Activated naive CD4-positive, alpha-beta T cell treated with anti-CD3 and anti-CD28 coated beads for 36 hours (primary cell): ENCODE measurements at regions of chr14 and their contacts with region 1.

Region 1: GRCh38 chr14:95527387-95528002 is 7.4 kb upstream of the GLRX5 start:
- DNase-seq: peak; percentile 81
- H3K4me3 Mint-ChIP-seq: peak overlapping the region; percentile 16
- H3K27ac Mint-ChIP-seq: peak overlapping the region; percentile 79
- H3K4me1 Mint-ChIP-seq: peaks cover 79% of the 10 kb centered on the region
- H3K27me3 Mint-ChIP-seq: no peaks in the 10 kb centered on the region

Region 2: DNA sequence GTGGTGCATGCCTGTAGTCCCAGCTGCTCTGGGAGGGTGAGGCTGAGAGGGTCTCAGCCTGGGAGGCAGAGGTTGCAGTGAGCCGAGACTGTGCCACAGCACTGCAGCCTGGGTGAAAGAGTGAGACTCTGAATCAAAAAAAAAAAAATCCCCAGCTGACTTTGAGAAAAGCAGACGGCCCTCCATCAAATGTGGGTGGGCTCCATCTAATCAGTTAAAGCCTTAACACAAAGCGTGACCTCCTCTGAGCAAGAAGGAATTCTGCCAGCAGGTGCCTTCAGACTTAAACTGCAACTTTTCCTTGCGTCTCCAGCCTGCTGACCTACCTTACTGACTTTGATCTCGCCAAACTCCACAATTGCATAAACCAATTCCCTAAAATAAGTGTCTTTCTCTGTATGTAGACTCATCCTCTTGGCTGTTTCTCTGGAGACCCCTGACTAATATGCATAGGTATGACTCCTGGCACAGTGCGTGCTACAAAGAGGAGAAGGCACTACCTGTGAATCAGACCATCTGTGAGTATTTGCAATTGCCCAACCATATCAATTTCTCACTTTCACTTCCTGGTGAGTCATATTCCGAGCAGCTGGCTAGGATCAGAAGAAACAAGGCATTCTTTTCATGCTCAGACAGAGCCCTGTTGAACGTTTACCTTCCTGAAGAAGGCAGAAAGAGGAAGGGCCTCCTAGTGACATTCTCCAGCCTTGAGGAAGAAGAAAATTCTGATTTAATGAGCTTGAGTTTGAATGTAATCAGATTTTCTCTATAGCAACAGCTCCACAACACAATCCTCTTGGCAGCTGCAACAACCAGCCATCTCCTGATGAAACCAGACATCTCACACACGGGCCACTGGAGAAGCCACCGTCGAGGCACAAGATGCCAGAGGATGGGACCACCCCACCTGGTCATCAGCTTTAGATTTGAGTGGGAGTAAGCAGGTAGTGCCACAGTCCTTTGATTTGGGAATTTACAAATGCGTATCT is 262.1 kb before region 1 on chr14:
- CTCF ChIA-PET with region 1: interaction called, 4 read pairs
- intact Hi-C with region 1: loop called (anchors 1 kb)
- DNase-seq: peak; percentile 79
- H3K4me3 Mint-ChIP-seq: no peak overlapping the region
- H3K27ac Mint-ChIP-seq: peak overlapping the region; percentile 56
- H3K4me1 Mint-ChIP-seq: peaks cover 36% of the 10 kb centered on the region
- H3K27me3 Mint-ChIP-seq: no peaks in the 10 kb centered on the region

Region 3: GRCh38 chr14:95442633-95443021 is 84.9 kb before region 1 on chr14:
- CTCF ChIA-PET with region 1: interaction called, 184 read pairs
- intact Hi-C with region 1: loop called (anchors 1 kb)
- DNase-seq: peak; percentile 88
- H3K4me3 Mint-ChIP-seq: no peak overlapping the region
- H3K27ac Mint-ChIP-seq: peak overlapping the region; percentile 20
- H3K4me1 Mint-ChIP-seq: peaks cover 7% of the 10 kb centered on the region
- H3K27me3 Mint-ChIP-seq: no peaks in the 10 kb centered on the region

Region 4: DNA sequence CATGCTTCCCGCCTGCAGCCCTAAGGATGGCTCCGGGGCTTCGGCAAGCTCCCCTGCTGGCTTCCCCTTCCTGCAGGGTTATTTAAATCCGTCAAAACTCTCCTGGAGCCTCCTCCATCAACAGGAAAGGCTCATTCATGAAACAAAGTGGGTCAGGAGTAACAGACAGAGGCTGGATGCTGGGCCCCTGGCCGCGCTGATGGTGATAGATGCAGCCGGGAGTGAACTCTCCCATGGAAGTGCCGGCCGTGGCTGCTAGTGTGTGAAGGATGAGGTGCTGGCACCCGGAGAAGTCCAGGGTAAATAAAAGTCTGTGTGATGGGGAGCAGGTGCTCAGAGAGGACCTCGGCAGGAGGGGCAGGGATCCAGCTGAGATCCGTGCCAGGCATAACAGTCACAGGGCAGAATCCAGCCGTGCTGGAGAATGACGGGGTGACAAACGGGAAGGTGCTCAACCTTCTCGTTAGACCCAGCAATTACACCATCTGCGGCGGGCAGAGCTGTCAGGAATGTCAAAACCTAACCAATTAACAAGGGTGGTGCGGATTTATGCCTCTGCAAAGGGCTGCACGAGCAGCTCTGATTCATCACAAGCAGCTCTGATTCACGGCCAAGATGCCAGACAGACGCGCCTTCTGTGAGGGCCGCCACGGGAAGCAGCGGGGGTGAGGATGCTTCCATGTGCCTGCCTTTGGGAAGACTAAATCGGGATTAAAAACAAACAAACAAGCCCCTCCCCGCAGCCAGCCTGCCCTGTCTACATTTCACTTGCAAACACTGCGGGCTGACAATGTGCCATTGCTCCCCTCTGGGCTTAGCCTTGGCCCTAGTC is 66.6 kb before region 1 on chr14:
- CTCF ChIA-PET with region 1: interaction called, 13 read pairs
- intact Hi-C with region 1: loop called (anchors 1 kb)
- DNase-seq: no peak
- H3K4me3 Mint-ChIP-seq: no peak overlapping the region
- H3K27ac Mint-ChIP-seq: no peak overlapping the region
- H3K4me1 Mint-ChIP-seq: peaks cover 61% of the 10 kb centered on the region
- H3K27me3 Mint-ChIP-seq: no peaks in the 10 kb centered on the region

Region 5: DNA sequence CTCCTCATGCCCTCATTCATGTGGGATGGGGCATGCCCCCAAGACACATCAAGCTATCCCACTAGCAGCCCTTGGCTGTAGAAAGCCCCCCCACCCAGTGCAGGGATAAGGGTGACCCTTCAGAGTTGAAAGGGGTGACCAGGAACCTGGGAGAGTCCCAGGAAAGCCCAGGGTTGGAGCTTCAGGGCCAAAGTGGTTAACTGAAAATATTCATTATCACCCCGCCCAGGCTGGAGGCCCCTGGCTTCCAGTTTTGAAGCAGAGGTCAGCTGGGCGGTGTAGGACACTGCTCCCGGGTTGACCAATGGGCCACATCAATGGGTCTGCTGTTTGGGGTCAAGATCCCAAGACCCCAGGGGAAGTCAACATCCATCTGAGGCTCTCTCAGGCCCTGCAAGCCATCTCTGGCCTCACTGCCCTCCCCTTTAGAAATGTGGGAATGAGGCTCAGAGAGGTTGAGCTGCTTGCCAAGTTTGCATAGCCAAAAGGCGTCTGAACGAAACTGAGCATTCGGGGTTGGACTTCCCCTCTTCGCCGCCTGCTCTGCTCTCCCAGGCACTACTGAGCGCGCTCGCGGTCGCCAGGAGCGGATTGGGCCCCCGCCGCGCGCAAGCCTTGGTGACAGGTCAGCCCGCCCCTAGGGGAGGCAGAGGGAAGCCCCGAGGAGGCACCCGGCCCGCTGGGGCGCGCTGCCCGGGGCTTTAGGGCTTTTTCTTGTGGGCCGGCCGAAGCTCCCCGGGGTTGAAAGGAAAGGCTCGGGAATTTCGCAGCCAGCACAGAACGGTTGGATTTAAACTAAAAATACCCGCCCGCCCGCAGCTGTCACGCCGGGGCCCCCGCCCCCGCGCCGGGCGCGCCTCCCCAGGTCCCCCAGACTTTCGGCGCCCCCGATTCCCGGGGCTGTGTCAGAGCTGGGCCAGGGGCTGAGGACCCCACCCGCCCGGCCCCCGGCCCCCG is 11.6 kb before region 1 on chr14:
- CTCF ChIA-PET with region 1: interaction called, 29 read pairs
- intact Hi-C with region 1: loop called (anchors 1 kb)
- DNase-seq: peak; percentile 93
- H3K4me3 Mint-ChIP-seq: peak overlapping the region; percentile 80
- H3K27ac Mint-ChIP-seq: peak overlapping the region; percentile 79
- H3K4me1 Mint-ChIP-seq: peaks cover 61% of the 10 kb centered on the region
- H3K27me3 Mint-ChIP-seq: no peaks in the 10 kb centered on the region